Right cardiac atrium (tissue), 5 donors: ENCODE measurements at regions of chr2 and their contacts with region 1.

Region 1: DNA sequence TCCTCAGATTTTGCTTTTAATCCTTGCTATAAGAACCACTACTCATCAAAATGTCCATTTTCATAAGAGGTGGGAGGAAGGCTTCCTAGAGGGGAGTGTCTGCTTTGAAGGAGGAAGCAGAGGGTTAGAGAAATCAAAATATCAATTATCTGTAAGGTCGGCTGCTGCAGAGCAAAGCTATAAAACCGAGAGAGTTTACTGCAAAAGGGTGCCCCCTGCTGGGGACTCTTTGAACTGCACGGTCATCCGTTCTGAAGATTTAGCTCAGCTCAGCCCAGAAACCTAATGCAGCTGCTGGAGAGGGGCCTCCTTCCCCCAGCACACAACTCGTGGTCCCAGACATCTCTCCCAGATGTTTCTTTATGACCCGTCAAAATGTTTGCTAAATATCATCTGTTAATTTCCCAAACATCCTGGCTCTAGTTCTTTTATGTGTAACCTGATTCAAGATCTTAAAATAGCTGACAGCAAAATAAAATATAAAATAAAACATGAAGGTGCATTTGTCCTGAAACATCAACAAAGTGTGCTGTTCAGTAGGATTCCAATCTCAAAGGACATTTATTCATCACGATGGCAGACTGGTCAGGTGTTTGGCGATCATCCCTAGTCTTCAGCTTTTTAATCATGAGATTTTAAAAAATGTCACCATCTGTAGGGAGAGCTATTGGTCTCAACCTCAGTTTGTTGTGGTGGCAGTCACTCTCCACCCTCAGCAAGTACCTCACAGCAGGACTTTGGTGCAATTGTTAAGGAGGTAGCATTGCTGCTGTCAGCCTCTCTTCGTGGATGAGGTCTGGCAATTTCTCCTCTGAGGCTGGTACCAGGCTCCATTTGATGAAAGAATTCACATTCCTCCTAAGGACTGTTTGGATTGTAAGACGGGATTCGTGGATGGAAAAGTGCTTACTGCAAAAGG is 185.9 kb downstream of the MTX2 start:
- DNase-seq: peak; percentile 77 to 94 (median 86)
- ATAC-seq: peak; percentile 51 to 65
- H3K4me3 ChIP-seq: no peak overlapping the region
- H3K27ac ChIP-seq: no peak overlapping the region
- H3K4me1 ChIP-seq: no peaks in the 10 kb centered on the region
- H3K27me3 ChIP-seq: no peaks in the 10 kb centered on the region

Region 2: DNA sequence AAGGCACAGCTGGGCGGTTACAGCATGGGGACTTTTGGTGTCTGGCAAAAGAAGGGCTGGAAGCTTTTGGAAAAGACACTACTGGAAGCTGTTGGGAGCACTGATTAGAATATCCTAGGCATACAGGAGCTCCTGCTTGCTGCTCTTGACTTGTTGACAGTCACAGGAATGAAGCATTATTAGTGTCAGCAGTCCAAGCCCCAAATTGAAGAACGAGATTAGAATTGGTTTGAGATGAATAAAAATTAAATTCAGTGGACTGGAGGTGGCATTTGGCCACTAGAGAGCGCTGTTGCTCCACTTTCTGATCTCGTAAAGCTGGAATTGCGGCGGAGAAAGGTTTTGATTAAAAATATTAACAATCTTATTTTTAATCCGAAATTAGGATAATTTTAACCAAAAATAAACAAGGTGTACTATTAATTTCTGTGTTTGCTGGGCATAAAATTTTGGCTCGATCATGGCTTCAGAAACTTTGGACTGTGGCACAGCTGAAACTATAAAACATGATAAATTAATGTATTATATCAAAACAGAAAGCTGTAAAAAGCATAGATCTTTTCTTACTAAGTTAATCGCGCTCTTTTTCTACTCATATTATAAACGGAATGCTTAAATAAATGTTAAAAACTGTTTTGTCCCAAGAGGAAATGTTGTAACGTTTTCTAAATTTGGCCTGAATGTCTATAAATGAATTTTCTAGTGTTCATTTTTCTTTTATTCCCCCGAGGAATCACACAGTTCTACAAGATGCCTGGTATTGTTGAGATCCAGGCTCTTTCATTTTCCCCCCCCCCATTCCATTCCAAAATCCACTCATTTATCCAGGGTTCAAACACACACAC is 328.0 kb before region 1 on chr2:
- intact Hi-C with region 1: loop called in 1 of 4 experiments (anchors 5 kb)
- DNase-seq: peak in 2 of 3 donors; percentile 64 to 87
- ATAC-seq: no peak
- H3K4me3 ChIP-seq: no peak overlapping the region
- H3K27ac ChIP-seq: no peak overlapping the region
- H3K4me1 ChIP-seq: peaks cover 9% of the 10 kb centered on the region
- H3K27me3 ChIP-seq: peaks cover 9% of the 10 kb centered on the region

Region 3: DNA sequence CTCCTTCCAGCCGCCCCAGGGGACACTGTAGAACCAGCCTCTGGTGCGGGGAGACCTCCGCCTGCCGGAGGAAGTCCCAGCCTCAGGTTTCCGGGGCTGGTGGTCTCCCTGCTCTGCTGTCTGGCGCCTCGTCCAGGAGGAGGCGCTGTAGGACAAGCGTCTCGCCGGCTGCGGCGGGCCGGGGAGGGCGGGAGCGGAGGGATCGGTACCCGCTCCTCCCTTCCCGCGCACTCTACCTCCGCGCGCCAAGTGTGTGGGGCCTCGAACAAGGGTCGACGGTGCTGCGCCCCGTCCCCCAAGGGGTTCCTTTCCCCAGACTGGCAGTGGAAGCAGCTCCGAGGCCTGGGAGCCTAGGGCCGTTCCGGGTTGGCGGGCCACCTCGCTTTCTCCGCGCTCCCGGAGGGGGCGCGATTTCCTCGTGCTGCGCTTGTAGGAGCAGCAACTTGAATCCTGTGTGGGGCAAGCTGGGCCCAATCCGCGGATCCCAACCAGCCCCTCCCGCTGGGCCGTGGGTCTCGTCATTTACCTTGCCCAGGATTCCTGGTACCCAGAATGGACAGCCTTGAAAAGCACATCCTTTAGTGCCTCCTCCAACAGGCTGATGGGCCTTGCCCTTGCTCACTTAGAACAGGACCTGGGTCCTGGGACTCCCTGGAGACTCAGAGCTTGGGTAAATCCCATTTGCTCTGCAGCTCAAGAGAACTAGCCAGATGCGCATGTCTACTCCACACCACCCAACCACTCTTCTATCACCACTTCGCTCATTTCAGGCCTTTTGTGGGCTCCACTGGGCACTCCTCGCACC is 314.4 kb before region 1 on chr2:
- intact Hi-C with region 1: loop called (anchors 2 to 5 kb)
- DNase-seq: peak; percentile 69 to 88 (median 86)
- ATAC-seq: peak; percentile 92 to 95
- H3K4me3 ChIP-seq: peak overlapping the region; percentile 32
- H3K27ac ChIP-seq: no peak overlapping the region
- H3K4me1 ChIP-seq: no peaks in the 10 kb centered on the region
- H3K27me3 ChIP-seq: peaks cover 8% of the 10 kb centered on the region

Region 4: GRCh38 chr2:176317199-176317598 is 138.0 kb before region 1 on chr2:
- intact Hi-C with region 1: no loop called
- DNase-seq: no peak
- ATAC-seq: no peak
- H3K4me3 ChIP-seq: no peak overlapping the region
- H3K27ac ChIP-seq: no peak overlapping the region
- H3K4me1 ChIP-seq: no peaks in the 10 kb centered on the region
- H3K27me3 ChIP-seq: no peaks in the 10 kb centered on the region

Region 5: GRCh38 chr2:176338395-176338794 is 116.8 kb before region 1 on chr2:
- intact Hi-C with region 1: no loop called
- DNase-seq: peak in 1 of 3 donors; percentile 47
- ATAC-seq: no peak
- H3K4me3 ChIP-seq: no peak overlapping the region
- H3K27ac ChIP-seq: no peak overlapping the region
- H3K4me1 ChIP-seq: peaks cover 3% of the 10 kb centered on the region
- H3K27me3 ChIP-seq: no peaks in the 10 kb centered on the region

Region 6: GRCh38 chr2:176554101-176555048 is 99.2 kb after region 1 on chr2:
- intact Hi-C with region 1: loop called (anchors 10 kb)
- DNase-seq: peak in 1 of 3 donors; percentile 60
- ATAC-seq: peak; percentile 65 to 82
- H3K4me3 ChIP-seq: peak overlapping the region; percentile 38
- H3K27ac ChIP-seq: peak overlapping the region; percentile 14
- H3K4me1 ChIP-seq: peaks cover 2% of the 10 kb centered on the region
- H3K27me3 ChIP-seq: peaks cover 2% of the 10 kb centered on the region

Region 7: DNA sequence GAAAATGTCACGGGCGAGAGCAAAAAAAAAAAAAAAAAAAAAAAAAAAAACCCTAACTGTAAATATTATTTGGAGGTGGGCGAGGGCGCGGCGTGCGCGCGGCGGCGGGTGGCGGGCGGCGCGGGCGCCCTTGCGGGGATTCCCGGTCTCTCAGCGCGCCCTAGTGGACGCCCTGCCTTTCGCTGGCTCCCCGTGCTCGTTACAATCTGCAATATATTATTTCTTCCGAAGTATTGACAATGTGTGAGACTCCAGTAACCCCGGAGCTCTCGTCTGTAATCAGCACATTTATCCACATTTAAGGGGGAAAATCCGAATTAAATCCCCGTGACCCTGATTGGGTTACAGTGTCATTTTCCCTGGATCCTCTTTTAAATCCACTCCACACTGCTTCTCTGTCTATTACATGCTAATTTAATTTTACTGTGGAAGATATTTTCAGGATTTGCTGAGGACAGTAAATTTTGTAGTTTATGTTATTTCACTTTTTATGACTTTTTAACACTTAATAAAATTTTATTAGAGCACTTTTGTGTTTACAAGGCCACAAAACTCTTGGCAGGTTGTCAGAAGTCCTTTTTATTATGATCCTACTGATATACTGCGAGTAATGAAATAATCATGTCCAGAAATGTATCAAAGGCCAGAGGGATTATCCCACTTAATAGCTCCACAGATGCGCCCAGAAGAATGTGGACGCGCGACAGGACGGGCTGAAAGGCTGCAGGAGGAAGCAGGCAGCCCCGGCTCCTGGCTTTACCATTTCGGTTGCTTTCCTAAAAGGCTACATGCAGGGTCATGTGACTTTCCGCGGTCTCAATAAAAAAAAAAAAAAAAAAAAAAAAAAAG is 183.2 kb after region 1 on chr2:
- intact Hi-C with region 1: loop called in 3 of 4 experiments (anchors 10 kb)
- DNase-seq: peak; percentile 67 to 89 (median 85)
- ATAC-seq: peak; percentile 87 to 92
- H3K4me3 ChIP-seq: peak overlapping the region; percentile 41
- H3K27ac ChIP-seq: no peak overlapping the region
- H3K4me1 ChIP-seq: no peaks in the 10 kb centered on the region
- H3K27me3 ChIP-seq: no peaks in the 10 kb centered on the region

Region 8: GRCh38 chr2:176643646-176644045 is 188.5 kb after region 1 on chr2:
- intact Hi-C with region 1: loop called in 3 of 4 experiments (anchors 10 kb)
- DNase-seq: no peak
- ATAC-seq: peak in 1 of 2 donors; percentile 35
- H3K4me3 ChIP-seq: no peak overlapping the region
- H3K27ac ChIP-seq: no peak overlapping the region
- H3K4me1 ChIP-seq: no peaks in the 10 kb centered on the region
- H3K27me3 ChIP-seq: no peaks in the 10 kb centered on the region

Region 9: DNA sequence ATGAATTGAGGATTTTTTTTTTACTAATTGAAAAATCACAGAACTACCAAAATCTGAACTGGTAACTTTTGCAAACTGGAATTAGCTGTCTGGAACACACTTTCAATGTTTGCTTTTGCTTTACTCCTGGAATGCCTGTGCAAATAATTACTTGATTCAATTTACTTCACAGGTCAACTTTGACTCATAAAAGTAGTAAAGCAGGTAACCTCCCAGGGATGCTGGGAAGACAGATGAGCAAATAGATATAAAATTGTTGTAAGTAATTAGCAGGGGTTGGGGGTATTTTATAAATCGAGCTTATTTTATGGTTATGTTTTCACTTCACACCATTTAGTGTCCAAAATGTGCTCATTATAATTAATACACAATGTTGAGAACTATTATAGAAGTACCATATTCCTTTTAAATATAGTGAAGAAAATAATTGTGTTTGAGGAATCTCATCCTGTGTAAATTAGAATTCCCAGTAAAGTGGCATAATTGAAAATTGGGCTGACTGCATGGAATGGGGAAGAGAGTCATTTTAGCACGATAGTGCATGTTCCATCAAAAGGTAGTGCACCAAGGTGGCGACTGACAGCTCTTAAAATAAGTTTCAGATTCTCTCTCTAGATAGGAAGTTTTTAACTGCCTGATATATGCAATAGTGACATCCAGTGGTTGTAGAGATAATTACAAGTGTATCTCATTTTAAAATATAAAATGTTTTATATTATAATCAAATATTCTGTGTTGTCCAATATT is 359.3 kb after region 1 on chr2:
- intact Hi-C with region 1: loop called in 1 of 4 experiments (anchors 10 kb)
- DNase-seq: no peak
- ATAC-seq: no peak
- H3K4me3 ChIP-seq: no peak overlapping the region
- H3K27ac ChIP-seq: no peak overlapping the region
- H3K4me1 ChIP-seq: no peaks in the 10 kb centered on the region
- H3K27me3 ChIP-seq: no peaks in the 10 kb centered on the region